Prostate gland (tissue), 2 donors: ENCODE measurements at regions of chr3 and their contacts with region 1.

Region 1: DNA sequence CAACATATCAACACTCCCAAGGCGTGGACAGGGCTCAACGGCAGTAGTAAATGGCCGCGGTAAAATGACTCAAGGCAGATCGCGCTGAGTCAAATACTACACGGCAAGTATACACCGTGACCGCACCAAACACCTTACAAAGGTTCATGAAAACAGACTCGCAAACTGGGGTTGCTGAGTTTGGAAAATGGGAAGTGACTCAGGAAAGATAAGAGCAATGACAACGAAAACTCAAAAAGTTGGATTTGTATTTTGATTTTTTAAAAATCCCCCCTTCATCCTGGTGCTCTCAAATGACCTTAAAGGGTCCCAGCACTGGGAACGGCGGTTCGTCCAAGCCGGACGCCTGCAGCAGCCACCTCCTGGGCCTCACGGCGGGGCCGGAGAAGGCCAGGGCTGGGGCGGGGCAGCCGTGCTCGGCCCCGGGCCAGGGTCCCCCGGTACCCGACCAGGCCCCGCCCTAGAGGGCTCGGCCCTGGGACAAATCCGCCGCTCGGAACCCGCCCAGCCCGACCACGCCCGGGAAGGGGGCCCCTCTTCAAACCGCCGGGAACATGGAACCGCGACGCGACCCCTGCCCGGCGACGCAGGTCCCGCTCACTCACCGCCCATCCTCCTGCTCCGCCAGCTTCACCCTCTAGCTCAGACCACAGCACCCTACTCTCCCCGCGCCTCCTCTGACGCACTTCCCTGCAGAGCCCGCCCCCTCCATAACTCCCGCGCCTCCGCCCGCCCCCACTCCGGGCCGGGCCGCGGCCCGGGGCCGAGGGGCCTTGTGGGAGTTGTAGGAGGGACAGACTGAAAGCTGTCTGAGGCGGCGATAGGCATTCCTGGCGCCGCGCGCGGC is at the start of gene CLDND1:
- DNase-seq: peak; percentile 97
- H3K4me3 ChIP-seq: peak within 1 kb of the TSS; percentile 65 to 87
- H3K27ac ChIP-seq: peak within 1 kb of the TSS; percentile 96 to 98
- H3K4me1 ChIP-seq: no peaks in the 10 kb centered on the region
- H3K27me3 ChIP-seq: no peaks in the 10 kb centered on the region
- CTCF ChIP-seq: no peak
- POLR2A ChIP-seq: peak; percentile 89
- total RNA-seq, gene CLDND1: 71.2 to 113 TPM

Region 2: DNA sequence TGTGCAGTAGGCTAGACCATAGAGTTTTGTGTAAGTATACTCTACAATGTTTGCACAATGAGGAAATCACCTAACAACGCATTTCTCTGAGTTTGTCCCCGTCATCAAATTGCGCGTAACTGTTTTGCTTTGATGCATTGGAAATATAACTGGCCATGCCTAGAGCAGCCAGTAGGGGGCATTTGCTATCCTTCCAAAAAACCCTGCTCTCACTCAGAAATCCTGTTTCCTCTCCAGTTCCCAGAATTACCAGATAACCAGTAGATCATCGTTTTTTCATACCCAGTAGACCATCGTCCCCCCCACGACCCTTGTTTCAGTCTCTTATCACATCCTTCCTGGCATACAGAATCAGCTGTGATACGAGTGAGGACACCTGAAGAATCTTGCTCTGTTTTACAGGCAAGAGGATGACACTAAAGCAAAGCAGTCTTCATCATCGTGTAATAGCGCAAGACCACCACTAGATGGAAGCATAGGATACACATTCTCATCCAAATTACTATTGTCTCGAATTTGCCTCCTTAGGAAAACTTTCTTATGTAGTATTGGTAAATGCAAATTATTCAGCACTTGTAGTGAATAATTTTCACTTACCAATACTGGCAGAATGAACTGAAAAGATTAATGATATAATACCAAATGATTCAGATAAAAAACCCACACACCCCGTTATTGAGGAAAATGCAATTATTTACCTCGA is 483.0 kb before region 1 on chr3:
- intact Hi-C with region 1: no loop called
- DNase-seq: peak; percentile 69
- H3K4me3 ChIP-seq: no peak overlapping the region
- H3K27ac ChIP-seq: no peak overlapping the region
- H3K4me1 ChIP-seq: no peaks in the 10 kb centered on the region
- H3K27me3 ChIP-seq: no peaks in the 10 kb centered on the region
- CTCF ChIP-seq: peak; percentile 76 to 98 (median 85)
- POLR2A ChIP-seq: no peak

Region 3: DNA sequence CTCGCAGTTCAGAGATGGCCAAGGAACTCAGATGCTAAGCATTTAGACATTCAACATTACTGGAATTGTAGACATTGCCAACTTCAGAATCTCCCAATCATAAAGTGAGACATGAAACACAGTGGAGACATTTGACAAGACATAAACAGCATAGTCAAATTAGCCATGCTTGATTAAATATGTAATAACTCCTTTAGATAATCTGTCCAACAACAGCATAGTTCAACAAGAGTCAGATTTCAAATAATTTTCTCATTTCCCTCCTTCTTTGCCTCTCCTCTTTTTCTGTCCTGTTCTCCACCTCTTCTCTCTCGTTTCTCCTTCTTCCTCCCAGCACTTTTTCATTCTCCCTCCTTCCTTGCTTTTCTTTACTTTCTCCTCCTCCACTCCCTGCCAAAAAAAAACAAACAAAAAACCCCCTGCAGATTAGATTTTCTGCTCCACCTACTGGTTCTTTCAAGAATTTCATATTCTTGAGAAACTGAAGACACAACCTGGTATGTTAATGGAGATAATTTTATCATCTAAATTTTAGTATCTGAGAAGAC is 50.8 kb after region 1 on chr3:
- intact Hi-C with region 1: no loop called
- DNase-seq: no peak
- H3K4me3 ChIP-seq: no peak overlapping the region
- H3K27ac ChIP-seq: no peak overlapping the region
- H3K4me1 ChIP-seq: no peaks in the 10 kb centered on the region
- H3K27me3 ChIP-seq: no peaks in the 10 kb centered on the region
- CTCF ChIP-seq: peak in 2 of 4 experiments; percentile 10 to 23
- POLR2A ChIP-seq: no peak

Region 4: GRCh38 chr3:98593046-98593936 is 70.8 kb after region 1 on chr3 and contains the start of gene CPOX:
- intact Hi-C with region 1: loop called (anchors 5 kb)
- DNase-seq: peak; percentile 80
- H3K4me3 ChIP-seq: peak within 1 kb of the TSS; percentile 70 to 84
- H3K27ac ChIP-seq: peak within 1 kb of the TSS; percentile 74 to 84
- H3K4me1 ChIP-seq: no peaks in the 10 kb centered on the region
- H3K27me3 ChIP-seq: no peaks in the 10 kb centered on the region
- CTCF ChIP-seq: no peak
- POLR2A ChIP-seq: peak; percentile 37
- total RNA-seq, gene CPOX: 25.3 to 25.6 TPM